Gastrocnemius medialis (tissue), 4 donors: ENCODE measurements at regions of chr7 and their contacts with region 1.

Region 1: GRCh38 chr7:95476904-95477594 is 8.7 kb upstream of the ASB4 start:
- DNase-seq: peak; percentile 38 to 63
- ATAC-seq: peak; percentile 77 to 83
- H3K4me3 ChIP-seq: peak overlapping the region; percentile 10 to 38 (median 21)
- H3K27ac ChIP-seq: peak overlapping the region; percentile 38 to 51 (median 44)
- H3K4me1 ChIP-seq: no peaks in the 10 kb centered on the region
- H3K27me3 ChIP-seq: no peaks in the 10 kb centered on the region
- CTCF ChIP-seq: peak; percentile 70 to 83 (median 73)
- POLR2A ChIP-seq: no peak

Region 2: DNA sequence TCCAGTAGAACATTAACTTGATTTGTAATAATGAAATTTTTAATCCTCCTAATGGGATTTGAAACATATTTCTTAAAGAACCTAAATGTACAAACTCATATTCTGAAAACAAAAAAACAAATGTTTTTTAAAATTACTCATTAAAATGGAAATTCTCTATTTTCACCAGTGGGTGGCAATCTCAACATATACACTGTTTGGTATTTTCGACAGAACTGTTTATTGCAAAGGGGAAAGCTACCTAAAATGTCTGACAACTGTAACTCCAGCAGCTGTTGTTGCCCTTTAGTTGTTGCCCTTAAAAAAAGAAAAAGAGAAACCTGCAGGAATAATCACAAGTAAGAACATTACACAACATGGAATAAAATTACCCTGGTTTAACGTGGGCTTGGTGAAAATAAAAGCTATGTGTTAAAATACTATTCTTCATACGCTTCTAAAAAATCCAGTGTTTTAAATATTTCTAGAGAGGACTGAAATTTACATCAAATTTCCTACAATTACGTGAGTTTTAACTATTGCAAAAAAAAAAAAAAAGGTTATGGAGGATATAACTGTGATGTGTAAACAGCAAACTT is 1027.8 kb before region 1 on chr7:
- in situ Hi-C with region 1: loop called in 3 of 4 experiments (anchors 5 to 25 kb)
- intact Hi-C with region 1: no loop called
- DNase-seq: no peak
- ATAC-seq: peak in 1 of 2 donors; percentile 58
- H3K4me3 ChIP-seq: no peak overlapping the region
- H3K27ac ChIP-seq: no peak overlapping the region
- H3K4me1 ChIP-seq: peaks cover 5 to 9% of the 10 kb centered on the region in 2 donors
- H3K27me3 ChIP-seq: no peaks in the 10 kb centered on the region
- CTCF ChIP-seq: peak in 4 of 5 experiments; percentile 37 to 60 (median 56)
- POLR2A ChIP-seq: no peak

Region 3: GRCh38 chr7:94509879-94510581 is 967.0 kb before region 1 on chr7:
- in situ Hi-C with region 1: no loop called
- intact Hi-C with region 1: loop called (anchors 5 kb)
- DNase-seq: peak; percentile 43 to 59
- ATAC-seq: peak; percentile 85 to 90
- H3K4me3 ChIP-seq: peak overlapping the region; percentile 80 to 94 (median 88)
- H3K27ac ChIP-seq: peak overlapping the region; percentile 88 to 95 (median 94)
- H3K4me1 ChIP-seq: peaks cover 28 to 36% of the 10 kb centered on the region in 2 donors
- H3K27me3 ChIP-seq: no peaks in the 10 kb centered on the region
- CTCF ChIP-seq: peak in 3 of 5 experiments; percentile 9 to 53 (median 33)
- POLR2A ChIP-seq: peak in 1 of 2 donors; percentile 18

Region 4: GRCh38 chr7:95238252-95238943 is 238.7 kb before region 1 on chr7:
- in situ Hi-C with region 1: no loop called
- intact Hi-C with region 1: no loop called
- DNase-seq: no peak
- ATAC-seq: no peak
- H3K4me3 ChIP-seq: no peak overlapping the region
- H3K27ac ChIP-seq: no peak overlapping the region
- H3K4me1 ChIP-seq: no peaks in the 10 kb centered on the region
- H3K27me3 ChIP-seq: no peaks in the 10 kb centered on the region
- CTCF ChIP-seq: no peak
- POLR2A ChIP-seq: no peak

Region 5: GRCh38 chr7:95263785-95264575 is 213.1 kb before region 1 on chr7:
- in situ Hi-C with region 1: no loop called
- intact Hi-C with region 1: loop called (anchors 10 kb)
- DNase-seq: no peak
- ATAC-seq: no peak
- H3K4me3 ChIP-seq: no peak overlapping the region
- H3K27ac ChIP-seq: no peak overlapping the region
- H3K4me1 ChIP-seq: no peaks in the 10 kb centered on the region
- H3K27me3 ChIP-seq: no peaks in the 10 kb centered on the region
- CTCF ChIP-seq: no peak
- POLR2A ChIP-seq: no peak

Region 6: DNA sequence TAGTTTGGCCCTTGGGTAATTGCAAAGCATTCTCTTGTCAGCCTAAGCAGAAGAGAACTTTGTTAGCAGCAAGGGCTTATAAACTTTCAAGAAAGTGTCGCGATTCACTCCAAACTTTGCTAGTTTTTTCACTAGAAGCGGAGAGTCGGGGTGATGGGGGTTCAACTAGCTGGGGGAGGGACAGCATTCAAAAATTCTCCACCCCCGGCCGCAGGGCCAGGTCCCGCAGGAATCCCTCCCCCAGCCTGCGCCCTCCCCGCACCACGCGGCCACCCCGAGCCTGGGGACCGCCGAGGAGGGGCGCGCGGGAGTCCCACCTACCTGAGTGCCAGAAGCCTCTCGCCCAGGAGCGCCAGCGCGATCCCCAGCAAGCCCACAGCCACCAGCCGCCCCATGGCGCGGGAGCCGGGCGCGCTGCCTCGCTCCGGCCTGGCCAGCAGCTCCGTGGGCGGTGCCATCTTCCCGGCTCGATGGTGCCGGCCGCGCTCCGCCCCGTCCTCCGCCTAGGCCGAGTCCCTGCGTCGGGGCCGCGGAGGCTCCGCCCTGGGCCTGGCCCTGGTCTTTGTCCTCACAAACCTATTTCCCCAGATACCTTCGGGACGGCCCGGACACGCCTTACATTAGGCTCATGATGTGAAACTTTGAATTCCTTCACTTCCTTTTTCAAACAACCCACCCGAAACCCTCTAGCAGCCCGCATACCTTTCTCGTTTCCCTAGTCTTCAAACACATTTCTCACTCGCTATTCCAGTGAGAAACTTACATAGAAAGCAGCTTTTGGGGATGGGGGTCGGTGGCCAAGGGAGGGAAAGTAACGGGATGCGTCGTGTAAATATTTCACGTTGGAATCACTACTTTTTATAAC is 42.3 kb before region 1 on chr7 and contains the start of gene PON2:
- in situ Hi-C with region 1: no loop called
- intact Hi-C with region 1: loop called (anchors 2 kb)
- DNase-seq: peak; percentile 35 to 68
- ATAC-seq: peak; percentile 90 to 93
- H3K4me3 ChIP-seq: peak within 1 kb of the TSS; percentile 67 to 83 (median 76)
- H3K27ac ChIP-seq: peak within 1 kb of the TSS; percentile 76 to 91 (median 90)
- H3K4me1 ChIP-seq: peaks cover 0 to 4% of the 10 kb centered on the region in 2 donors
- H3K27me3 ChIP-seq: no peaks in the 10 kb centered on the region
- CTCF ChIP-seq: no peak
- POLR2A ChIP-seq: peak; percentile 28 to 44
- total RNA-seq, gene PON2: 10.2 to 45.4 (median 23.5) TPM